Activated naive CD4-positive, alpha-beta T cell treated with anti-CD3 and anti-CD28 coated beads for 36 hours (primary cell): ENCODE measurements at regions of chr12 and their contacts with region 1.

Region 1: GRCh38 chr12:45728630-45729232 is 775 bp upstream of the ARID2 start:
- DNase-seq: peak; percentile 96
- H3K4me3 Mint-ChIP-seq: peak overlapping the region; percentile 95
- H3K27ac Mint-ChIP-seq: peak overlapping the region; percentile 99
- H3K4me1 Mint-ChIP-seq: peaks cover 19% of the 10 kb centered on the region
- H3K27me3 Mint-ChIP-seq: no peaks in the 10 kb centered on the region

Region 2: DNA sequence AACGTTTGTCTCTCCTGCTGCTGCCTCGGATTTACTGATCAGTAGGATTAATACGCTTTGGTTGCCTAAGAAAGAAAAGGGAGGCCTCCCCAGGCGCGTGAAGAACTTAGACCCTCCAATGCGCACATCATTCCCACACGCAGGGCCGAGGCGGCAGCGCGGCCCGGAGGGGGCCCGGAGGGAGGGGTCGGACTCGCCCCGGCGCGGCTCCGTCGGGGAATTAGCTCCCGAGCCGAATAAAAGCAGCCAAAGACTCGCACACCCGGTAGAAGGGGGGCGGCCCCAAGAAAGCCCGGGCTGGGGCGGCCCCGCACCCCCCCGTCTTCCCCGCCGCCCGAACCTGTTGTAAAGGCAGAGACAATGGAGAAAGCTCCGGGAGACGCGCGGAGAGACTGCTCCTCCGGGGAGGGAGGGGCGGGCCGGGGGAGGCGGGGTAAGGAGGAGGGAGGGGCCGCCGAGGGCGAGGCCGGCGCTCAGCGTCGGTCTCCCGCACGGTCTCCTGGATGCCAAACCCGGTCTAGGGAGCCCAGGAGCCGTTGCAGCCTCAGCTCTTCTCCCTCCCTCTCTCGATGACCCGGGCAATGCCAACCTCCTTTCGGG is 852.7 kb before region 1 on chr12 and contains the start of gene NELL2:
- CTCF ChIA-PET with region 1: no interaction called
- intact Hi-C with region 1: loop called (anchors 10 kb)
- DNase-seq: peak; percentile 82
- H3K4me3 Mint-ChIP-seq: peak within 1 kb of the TSS; percentile 99
- H3K27ac Mint-ChIP-seq: peak within 1 kb of the TSS; percentile 91
- H3K4me1 Mint-ChIP-seq: peaks cover 23% of the 10 kb centered on the region
- H3K27me3 Mint-ChIP-seq: peaks cover 6% of the 10 kb centered on the region
- total RNA-seq, gene NELL2: 61.9 to 72.2 TPM

Region 3: DNA sequence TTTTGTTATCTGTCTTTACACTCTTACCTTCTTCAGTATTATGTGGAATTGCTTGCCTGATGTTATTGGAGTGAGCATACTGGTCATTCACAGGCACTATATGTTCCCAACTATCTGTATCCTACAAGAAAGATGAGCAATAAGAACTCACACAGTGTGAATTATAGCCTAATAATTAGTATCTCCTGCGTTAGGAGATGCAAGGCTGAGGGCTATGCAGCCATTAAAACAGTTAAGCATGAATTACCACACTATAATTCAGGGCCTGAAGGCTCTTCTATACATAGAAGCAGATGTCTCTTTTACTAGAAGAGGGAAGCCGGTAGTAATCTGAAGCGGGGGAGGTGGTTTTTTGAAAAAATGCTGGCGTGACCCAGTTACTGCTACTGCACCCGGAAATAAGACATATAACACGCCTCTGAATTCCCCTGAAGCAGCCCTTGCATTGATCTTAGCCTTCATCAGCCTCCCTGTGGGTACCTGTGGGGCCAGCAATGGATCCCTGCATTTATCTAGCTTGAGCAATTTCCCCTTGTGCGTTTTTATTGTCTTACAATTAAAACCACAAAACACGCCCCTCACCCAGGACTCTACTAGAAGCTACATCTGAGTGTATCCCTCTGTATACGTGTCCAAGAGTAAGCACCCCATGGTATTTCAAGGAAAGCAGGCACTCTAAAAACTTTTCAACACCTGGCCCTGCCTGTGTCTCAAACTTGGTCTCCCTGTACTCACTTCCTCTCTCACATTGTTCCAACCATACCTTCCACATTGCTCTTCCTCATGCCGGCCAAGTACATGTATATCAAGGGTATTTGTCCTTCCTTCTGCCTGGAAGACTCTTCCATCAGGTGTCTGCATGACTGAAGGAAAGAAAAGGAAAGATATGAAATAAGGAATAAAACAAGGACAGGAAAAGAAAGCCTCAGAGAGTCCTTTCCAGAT is 210.2 kb before region 1 on chr12:
- CTCF ChIA-PET with region 1: interaction called, 3 read pairs
- intact Hi-C with region 1: loop called (anchors 1 kb)
- DNase-seq: peak; percentile 83
- H3K4me3 Mint-ChIP-seq: peak overlapping the region; percentile 40
- H3K27ac Mint-ChIP-seq: peak overlapping the region; percentile 85
- H3K4me1 Mint-ChIP-seq: peaks cover 12% of the 10 kb centered on the region
- H3K27me3 Mint-ChIP-seq: no peaks in the 10 kb centered on the region

Region 4: GRCh38 chr12:45745861-45746277 is 17.1 kb after region 1 on chr12:
- CTCF ChIA-PET with region 1: interaction called, 12 read pairs
- intact Hi-C with region 1: loop called (anchors 1 kb)
- DNase-seq: no peak
- H3K4me3 Mint-ChIP-seq: no peak overlapping the region
- H3K27ac Mint-ChIP-seq: no peak overlapping the region
- H3K4me1 Mint-ChIP-seq: peaks cover 57% of the 10 kb centered on the region
- H3K27me3 Mint-ChIP-seq: no peaks in the 10 kb centered on the region

Region 5: DNA sequence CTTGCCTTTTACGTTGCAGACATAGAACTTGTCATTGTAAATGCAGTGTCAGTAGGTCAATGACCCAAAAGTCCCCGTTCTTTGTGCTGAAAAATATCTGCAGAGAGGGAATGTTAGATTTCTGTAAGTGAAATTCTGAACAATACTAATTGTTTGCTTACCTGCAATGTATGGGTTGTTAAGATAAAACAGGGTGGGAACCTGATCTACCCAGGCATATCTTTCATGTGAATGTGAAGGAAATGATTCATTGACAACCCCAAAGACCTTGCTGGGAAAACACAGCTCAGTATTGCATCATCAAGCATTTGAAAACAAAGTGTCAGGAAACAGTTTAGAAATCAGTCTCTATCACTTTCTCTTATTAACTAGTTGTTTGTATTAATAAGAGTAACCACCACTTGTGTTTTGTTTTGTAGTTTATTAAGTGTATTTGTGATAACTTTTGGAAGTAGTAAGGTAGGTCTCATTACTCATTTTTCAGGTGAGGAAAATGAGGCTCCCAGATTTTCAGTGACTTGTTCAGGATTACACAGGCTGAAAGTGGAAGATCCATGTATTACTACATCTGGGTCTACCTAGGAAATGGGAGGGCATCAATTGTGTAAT is 701.7 kb after region 1 on chr12:
- CTCF ChIA-PET with region 1: no interaction called
- intact Hi-C with region 1: loop called (anchors 5 kb)
- DNase-seq: peak; percentile 64
- H3K4me3 Mint-ChIP-seq: peak overlapping the region; percentile 53
- H3K27ac Mint-ChIP-seq: peak overlapping the region; percentile 82
- H3K4me1 Mint-ChIP-seq: peaks cover 30% of the 10 kb centered on the region
- H3K27me3 Mint-ChIP-seq: no peaks in the 10 kb centered on the region

Region 6: GRCh38 chr12:47397664-47398281 is 1669.0 kb after region 1 on chr12:
- CTCF ChIA-PET with region 1: no interaction called
- intact Hi-C with region 1: loop called (anchors 10 kb)
- DNase-seq: peak; percentile 72
- H3K4me3 Mint-ChIP-seq: peak overlapping the region; percentile 33
- H3K27ac Mint-ChIP-seq: peak overlapping the region; percentile 100
- H3K4me1 Mint-ChIP-seq: peaks cover 95% of the 10 kb centered on the region
- H3K27me3 Mint-ChIP-seq: no peaks in the 10 kb centered on the region